Heart left ventricle (tissue), 16 donors: ENCODE measurements at regions of chr12 and their contacts with region 1.

Region 1: DNA sequence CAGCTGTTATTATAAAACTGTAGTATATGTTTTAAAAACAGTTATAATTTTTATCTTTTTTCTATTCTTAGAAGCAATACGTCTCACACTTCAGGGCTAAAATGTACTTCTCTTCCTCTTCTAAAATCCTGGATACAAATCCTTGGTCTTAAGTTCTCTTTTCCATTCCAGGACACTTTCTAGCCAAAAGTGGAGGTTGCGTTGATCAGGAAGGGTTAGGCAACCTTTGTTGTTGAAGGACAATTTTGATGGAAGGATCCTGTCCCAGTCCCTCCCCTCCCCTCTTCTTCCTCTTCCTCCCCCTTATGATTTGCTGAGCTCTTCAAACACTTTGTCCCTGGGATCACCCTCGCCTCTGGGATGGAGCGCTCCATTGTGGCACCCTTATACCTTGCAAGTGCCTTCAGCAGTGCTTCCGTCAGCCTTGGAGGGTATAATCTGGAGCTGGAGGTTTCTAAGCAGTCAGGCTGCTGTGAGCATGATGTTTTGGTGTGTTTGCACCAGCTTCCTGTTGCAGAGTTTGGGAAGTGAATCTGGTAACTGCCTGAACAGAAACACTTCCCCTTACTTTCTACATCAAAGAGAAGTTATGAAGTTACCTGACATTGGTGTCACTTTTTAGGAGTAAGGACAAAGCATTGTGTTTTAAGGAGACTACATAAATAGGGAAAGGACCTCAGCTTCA is 87.4 kb upstream of the SLC38A2 start:
- DNase-seq: peak in 1 of 5 donors; percentile 13
- ATAC-seq: peak in 3 of 4 donors; percentile 23 to 57 (median 49)
- H3K4me3 ChIP-seq: no peak overlapping the region
- H3K27ac ChIP-seq: peak overlapping the region in 5 of 12 donors; percentile 6 to 47 (median 33)
- H3K4me1 ChIP-seq: peaks cover 0 to 73% (median 36%) of the 10 kb centered on the region in 12 donors
- H3K27me3 ChIP-seq: no peaks in the 10 kb centered on the region
- CTCF ChIP-seq: no peak
- POLR2A ChIP-seq: no peak

Region 2: GRCh38 chr12:46391630-46392029 is 68.4 kb before region 1 on chr12:
- intact Hi-C with region 1: loop called in 2 of 10 experiments (anchors 5 to 10 kb)
- DNase-seq: peak in 3 of 5 donors; percentile 39 to 47 (median 40)
- ATAC-seq: peak in 1 of 4 donors; percentile 26
- H3K4me3 ChIP-seq: no peak overlapping the region
- H3K27ac ChIP-seq: peak overlapping the region in 6 of 12 donors; percentile 10 to 65 (median 30)
- H3K4me1 ChIP-seq: peaks cover 0 to 46% (median 25%) of the 10 kb centered on the region in 12 donors
- H3K27me3 ChIP-seq: no peaks in the 10 kb centered on the region
- CTCF ChIP-seq: no peak
- POLR2A ChIP-seq: no peak

Region 3: GRCh38 chr12:46401662-46402061 is 58.3 kb before region 1 on chr12:
- intact Hi-C with region 1: loop called in 1 of 10 experiments (anchors 5 kb)
- DNase-seq: peak in 3 of 5 donors; percentile 33 to 46 (median 45)
- ATAC-seq: peak; percentile 12 to 45 (median 36)
- H3K4me3 ChIP-seq: no peak overlapping the region
- H3K27ac ChIP-seq: peak overlapping the region in 3 of 12 donors; percentile 18 to 52 (median 31)
- H3K4me1 ChIP-seq: peaks cover 0 to 40% (median 25%) of the 10 kb centered on the region in 12 donors
- H3K27me3 ChIP-seq: no peaks in the 10 kb centered on the region
- CTCF ChIP-seq: peak in 9 of 12 donors; percentile 15 to 51 (median 35)
- POLR2A ChIP-seq: no peak

Region 4: DNA sequence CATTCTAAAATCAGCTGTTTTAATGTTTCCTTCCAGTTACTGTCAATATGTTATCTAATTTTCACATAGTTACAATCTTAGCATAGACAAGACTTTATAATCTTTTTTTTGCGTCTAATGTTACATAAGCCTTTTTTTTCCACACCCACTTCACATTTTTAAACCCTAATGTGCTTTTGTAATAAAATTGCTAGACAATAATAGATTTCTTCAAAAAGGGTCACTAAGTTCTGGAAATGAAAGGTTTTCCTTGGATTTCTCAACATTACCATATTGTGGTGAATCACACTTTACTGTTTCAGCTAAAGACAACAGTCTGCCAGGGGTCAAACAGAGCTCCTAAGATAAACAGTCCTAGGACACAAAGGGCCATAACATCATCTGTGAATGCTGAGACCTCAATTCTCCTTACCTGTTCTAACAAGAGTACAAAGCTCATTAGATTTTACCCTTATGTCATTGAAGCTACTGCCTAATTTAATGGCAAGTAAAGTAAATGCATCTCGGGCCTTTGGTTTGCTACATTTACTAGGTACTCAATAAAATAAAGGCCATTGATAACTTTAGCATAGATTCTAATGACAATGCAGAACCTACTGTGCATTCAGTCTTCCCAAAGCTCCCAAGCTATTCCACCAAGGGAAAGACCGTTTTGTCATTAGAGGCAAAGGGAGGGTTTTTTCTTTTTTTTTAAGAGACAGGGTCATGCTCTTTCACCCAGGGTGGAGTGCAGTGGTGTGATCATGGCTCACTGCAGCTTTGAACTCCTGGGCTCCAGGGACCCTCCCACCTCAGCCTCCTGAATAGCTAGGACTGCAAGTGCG is 23.8 kb after region 1 on chr12:
- intact Hi-C with region 1: no loop called
- DNase-seq: no peak
- ATAC-seq: peak in 1 of 4 donors; percentile 78
- H3K4me3 ChIP-seq: no peak overlapping the region
- H3K27ac ChIP-seq: peak overlapping the region in 3 of 12 donors; percentile 11 to 27 (median 18)
- H3K4me1 ChIP-seq: peaks cover 0 to 26% (median 5%) of the 10 kb centered on the region in 12 donors
- H3K27me3 ChIP-seq: no peaks in the 10 kb centered on the region
- CTCF ChIP-seq: no peak
- POLR2A ChIP-seq: no peak